KBM-7 (cell line): ENCODE measurements at regions of chr4 and their contacts with region 1.

Region 1: GRCh38 chr4:22410645-22411247 is 105.1 kb downstream of the ADGRA3 start:
- DNase-seq: peak; percentile 19

Region 2: GRCh38 chr4:22678940-22679854 is 268.5 kb after region 1 on chr4:
- in situ Hi-C with region 1: loop called (anchors 25 kb)
- DNase-seq: no peak